Posterior vena cava (tissue), 2 donors: ENCODE measurements at regions of chr1 and their contacts with region 1.

Region 1: DNA sequence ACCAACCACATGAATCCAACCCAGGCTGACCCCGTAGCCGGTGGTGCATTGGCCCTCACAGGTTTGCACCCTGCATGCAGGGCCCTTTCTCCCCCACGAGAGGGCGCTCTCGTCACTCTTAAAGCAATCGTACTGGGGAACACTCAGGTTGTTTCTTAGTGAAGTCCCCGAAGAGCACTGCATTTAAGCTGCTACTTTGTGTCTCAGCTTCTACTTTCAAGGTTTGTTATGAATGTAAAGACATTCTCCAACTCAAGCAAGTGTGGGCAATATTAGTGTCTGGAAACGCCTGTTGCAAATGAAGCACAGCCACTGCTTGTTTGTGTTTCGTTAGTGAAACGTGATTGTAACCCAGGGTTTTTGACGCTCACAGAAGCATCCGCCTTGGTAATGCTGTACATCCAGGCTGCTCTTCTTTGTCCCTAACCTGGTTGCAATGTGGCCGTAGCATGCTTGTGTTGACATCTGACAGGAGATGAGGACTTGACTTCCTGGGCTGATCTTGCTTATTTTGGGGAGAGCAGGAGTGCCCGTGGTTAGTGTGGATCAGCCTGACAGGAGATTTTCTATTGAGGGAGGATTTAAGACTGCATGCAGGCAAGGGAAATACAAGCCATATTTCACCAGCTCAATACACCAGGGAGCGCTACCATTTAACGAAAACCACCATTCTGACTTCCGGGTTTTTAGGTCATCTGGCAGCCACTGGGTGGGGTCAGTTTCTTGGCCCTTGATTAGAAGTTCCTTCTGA is 79.8 kb downstream of the ST6GALNAC3 start:
- DNase-seq: peak; percentile 91

Region 2: DNA sequence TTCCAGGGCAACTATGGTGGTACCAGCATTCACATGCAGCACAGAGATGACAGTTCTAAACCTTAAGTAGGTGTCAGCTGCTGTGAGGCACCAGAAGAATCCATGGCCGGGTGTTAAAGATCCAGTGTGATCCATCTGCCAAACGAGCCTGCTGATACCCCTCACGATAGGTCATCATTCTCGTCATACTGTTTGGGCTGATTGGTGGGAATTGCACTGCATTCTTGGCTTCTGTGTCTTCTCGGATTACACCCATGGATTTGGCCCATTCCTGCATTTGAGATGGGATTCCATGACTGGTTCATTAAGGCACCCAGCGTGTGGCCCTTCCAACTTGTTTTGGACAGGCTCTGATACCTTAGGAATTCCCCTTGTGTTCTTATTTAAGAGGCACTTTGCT is 24.6 kb before region 1 on chr1:
- intact Hi-C with region 1: loop called in 1 of 2 experiments (anchors 1 kb)
- DNase-seq: no peak

Region 3: DNA sequence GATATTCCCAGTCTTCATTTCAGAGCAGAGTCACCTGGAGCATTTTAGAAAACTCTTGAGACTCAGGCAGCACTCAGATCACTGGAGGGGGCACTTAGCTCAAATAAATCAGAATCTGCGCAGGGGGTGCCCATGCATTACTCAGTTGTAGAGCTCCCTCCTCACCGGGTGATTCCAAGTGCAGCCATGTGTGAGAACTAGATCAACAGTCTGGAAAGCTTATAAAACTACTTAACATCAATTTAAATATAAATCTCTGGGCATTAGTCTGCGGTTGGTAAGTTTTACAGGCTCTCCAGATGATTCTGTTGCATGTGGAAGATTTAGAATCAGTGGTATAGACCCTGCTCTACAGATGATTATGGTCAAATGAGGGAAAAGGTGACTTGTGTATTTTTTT is 48.8 kb after region 1 on chr1:
- intact Hi-C with region 1: no loop called
- DNase-seq: no peak

Region 4: GRCh38 chr1:77134359-77134758 is 980.0 kb after region 1 on chr1:
- intact Hi-C with region 1: loop called in 1 of 2 experiments (anchors 10 kb)
- DNase-seq: no peak